GM12878 (cell line): ENCODE measurements at regions of chr2 and their contacts with region 1.

Region 1: GRCh38 chr2:126527836-126528507 is 128.0 kb upstream of the GYPC start:
- DNase-seq: peak; percentile 11
- ATAC-seq: peak; percentile 91
- H3K4me3 ChIP-seq: no peak overlapping the region
- H3K27ac ChIP-seq: no peak overlapping the region
- H3K4me1 ChIP-seq: no peaks in the 10 kb centered on the region
- H3K27me3 ChIP-seq: no peaks in the 10 kb centered on the region
- CTCF ChIP-seq: peak; percentile 62 to 72 (median 71)
- EP300 ChIP-seq: no peak
- POLR2A ChIP-seq: no peak
- RAD21 ChIP-seq: peak; percentile 91

Region 2: GRCh38 chr2:126614524-126615227 is 86.7 kb after region 1 on chr2:
- CTCF ChIA-PET with region 1: interaction called, 8 read pairs
- POLR2A ChIA-PET with region 1: no interaction called
- RAD21 ChIA-PET with region 1: interaction called, 11 read pairs
- SMC1A ChIA-PET with region 1: interaction called, 17 read pairs
- in situ Hi-C with region 1: no loop called
- intact Hi-C with region 1: no loop called
- DNase-seq: no peak
- ATAC-seq: no peak
- H3K4me3 ChIP-seq: no peak overlapping the region
- H3K27ac ChIP-seq: no peak overlapping the region
- H3K4me1 ChIP-seq: no peaks in the 10 kb centered on the region; the same call in 1 of the 2 replicates
- H3K27me3 ChIP-seq: no peaks in the 10 kb centered on the region
- CTCF ChIP-seq: no peak
- EP300 ChIP-seq: no peak
- POLR2A ChIP-seq: no peak
- RAD21 ChIP-seq: no peak

Region 3: DNA sequence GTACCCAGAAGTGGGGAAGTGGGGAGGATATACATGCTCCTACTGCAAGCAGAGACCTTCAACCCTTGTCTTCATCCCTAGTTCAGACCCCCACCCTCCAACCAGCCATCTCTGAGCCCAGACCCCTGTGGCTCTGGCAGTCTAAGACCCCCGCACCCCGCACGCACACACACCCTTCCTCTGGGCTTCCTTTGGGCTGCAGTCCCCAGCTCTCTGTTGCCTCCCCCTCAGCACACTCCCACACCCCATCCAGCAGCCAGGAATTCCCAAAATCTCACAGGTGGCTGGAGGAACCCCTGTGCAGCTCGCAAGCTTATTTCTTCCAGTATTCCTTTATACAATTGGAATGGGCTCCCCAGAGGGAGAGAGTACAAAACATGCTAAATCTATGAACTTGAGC is 114.1 kb after region 1 on chr2:
- CTCF ChIA-PET with region 1: interaction called, 84 read pairs
- POLR2A ChIA-PET with region 1: no interaction called
- RAD21 ChIA-PET with region 1: interaction called, 3 read pairs
- SMC1A ChIA-PET with region 1: interaction called, 5 read pairs
- in situ Hi-C with region 1: no loop called
- intact Hi-C with region 1: no loop called
- DNase-seq: no peak
- ATAC-seq: no peak
- H3K4me3 ChIP-seq: no peak overlapping the region
- H3K27ac ChIP-seq: no peak overlapping the region
- H3K4me1 ChIP-seq: peaks cover 11% of the 10 kb centered on the region
- H3K27me3 ChIP-seq: no peaks in the 10 kb centered on the region
- CTCF ChIP-seq: no peak
- EP300 ChIP-seq: no peak
- POLR2A ChIP-seq: no peak
- RAD21 ChIP-seq: no peak

Region 4: GRCh38 chr2:126664234-126664633 is 136.3 kb after region 1 on chr2:
- CTCF ChIA-PET with region 1: interaction called, 6 read pairs
- POLR2A ChIA-PET with region 1: no interaction called
- RAD21 ChIA-PET with region 1: no interaction called
- SMC1A ChIA-PET with region 1: interaction called, 16 read pairs
- in situ Hi-C with region 1: no loop called
- intact Hi-C with region 1: no loop called
- DNase-seq: peak; percentile 67
- ATAC-seq: peak; percentile 84
- H3K4me3 ChIP-seq: peak overlapping the region; percentile 22; the same call in 1 of the 2 replicates
- H3K27ac ChIP-seq: peak overlapping the region; percentile 89
- H3K4me1 ChIP-seq: peaks cover 55% of the 10 kb centered on the region
- H3K27me3 ChIP-seq: no peaks in the 10 kb centered on the region
- CTCF ChIP-seq: no peak
- EP300 ChIP-seq: peak in 1 of 2 experiments; percentile 53; a peak in 1 of 4 replicates
- POLR2A ChIP-seq: no peak
- RAD21 ChIP-seq: no peak

Region 5: DNA sequence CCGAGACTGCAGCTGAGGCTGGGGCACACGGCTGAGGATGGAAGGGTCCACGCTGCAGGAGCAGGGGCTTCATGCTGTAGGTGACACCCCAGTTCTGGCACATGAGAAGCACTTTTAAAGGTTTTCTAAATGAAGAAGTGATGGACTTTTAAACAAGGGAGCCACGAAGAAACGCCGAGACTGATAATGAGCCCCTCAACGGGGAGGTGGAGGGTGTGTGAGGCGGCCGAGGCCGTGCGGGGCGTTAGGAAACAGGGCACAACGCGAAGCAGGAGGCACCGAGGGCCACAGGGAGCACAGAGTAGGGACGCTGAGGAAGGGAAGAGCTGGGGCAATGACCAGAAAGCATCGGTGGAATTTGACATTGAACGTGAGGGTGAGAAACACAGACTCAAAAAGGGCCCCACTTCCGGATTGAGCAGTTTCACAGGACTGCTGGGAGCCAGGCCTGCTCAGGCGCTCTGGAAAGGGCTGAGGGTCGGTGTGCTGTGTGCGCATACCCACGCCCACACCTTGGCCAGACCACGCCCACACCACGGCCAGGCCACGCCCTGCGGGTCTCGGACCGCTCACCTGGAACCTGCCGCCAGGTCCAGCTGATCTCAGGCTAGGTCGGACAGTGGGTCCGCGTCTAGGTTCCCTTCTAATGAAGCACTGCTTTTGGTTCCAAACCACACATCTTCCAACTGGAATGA is 243.7 kb after region 1 on chr2:
- CTCF ChIA-PET with region 1: interaction called, 124 read pairs
- POLR2A ChIA-PET with region 1: no interaction called
- RAD21 ChIA-PET with region 1: interaction called, 58 read pairs
- SMC1A ChIA-PET with region 1: interaction called, 58 read pairs
- in situ Hi-C with region 1: loop called (anchors 5 kb)
- intact Hi-C with region 1: no loop called
- DNase-seq: no peak
- ATAC-seq: no peak
- H3K4me3 ChIP-seq: no peak overlapping the region
- H3K27ac ChIP-seq: no peak overlapping the region
- H3K4me1 ChIP-seq: no peaks in the 10 kb centered on the region; the same call in 1 of the 2 replicates
- H3K27me3 ChIP-seq: no peaks in the 10 kb centered on the region; a peak in 1 of 4 replicates
- CTCF ChIP-seq: no peak
- EP300 ChIP-seq: no peak
- POLR2A ChIP-seq: no peak
- RAD21 ChIP-seq: no peak

Region 6: GRCh38 chr2:126971481-126972278 is 443.7 kb after region 1 on chr2:
- CTCF ChIA-PET with region 1: interaction called, 25 read pairs
- POLR2A ChIA-PET with region 1: no interaction called
- RAD21 ChIA-PET with region 1: interaction called, 15 read pairs
- SMC1A ChIA-PET with region 1: interaction called, 7 read pairs
- in situ Hi-C with region 1: no loop called
- intact Hi-C with region 1: loop called (anchors 1 kb)
- DNase-seq: no peak
- ATAC-seq: peak; percentile 96
- H3K4me3 ChIP-seq: no peak overlapping the region
- H3K27ac ChIP-seq: no peak overlapping the region
- H3K4me1 ChIP-seq: no peaks in the 10 kb centered on the region
- H3K27me3 ChIP-seq: peaks cover 0 to 3% of the 10 kb centered on the region in 2 experiments; a peak in 3 of 4 replicates
- CTCF ChIP-seq: peak; percentile 80 to 97 (median 89)
- EP300 ChIP-seq: no peak
- POLR2A ChIP-seq: no peak
- RAD21 ChIP-seq: peak; percentile 68

Region 7: GRCh38 chr2:128208023-128208665 is 1680.2 kb after region 1 on chr2:
- CTCF ChIA-PET with region 1: no interaction called
- POLR2A ChIA-PET with region 1: no interaction called
- RAD21 ChIA-PET with region 1: no interaction called
- SMC1A ChIA-PET with region 1: no interaction called
- in situ Hi-C with region 1: no loop called
- intact Hi-C with region 1: no loop called
- DNase-seq: no peak
- ATAC-seq: no peak
- H3K4me3 ChIP-seq: no peak overlapping the region
- H3K27ac ChIP-seq: no peak overlapping the region
- H3K4me1 ChIP-seq: no peaks in the 10 kb centered on the region
- H3K27me3 ChIP-seq: no peaks in the 10 kb centered on the region
- CTCF ChIP-seq: no peak
- EP300 ChIP-seq: no peak
- POLR2A ChIP-seq: no peak
- RAD21 ChIP-seq: no peak